ENCODE measurements at regions of chr1 and their contacts with region 1.

Region 1: DNA sequence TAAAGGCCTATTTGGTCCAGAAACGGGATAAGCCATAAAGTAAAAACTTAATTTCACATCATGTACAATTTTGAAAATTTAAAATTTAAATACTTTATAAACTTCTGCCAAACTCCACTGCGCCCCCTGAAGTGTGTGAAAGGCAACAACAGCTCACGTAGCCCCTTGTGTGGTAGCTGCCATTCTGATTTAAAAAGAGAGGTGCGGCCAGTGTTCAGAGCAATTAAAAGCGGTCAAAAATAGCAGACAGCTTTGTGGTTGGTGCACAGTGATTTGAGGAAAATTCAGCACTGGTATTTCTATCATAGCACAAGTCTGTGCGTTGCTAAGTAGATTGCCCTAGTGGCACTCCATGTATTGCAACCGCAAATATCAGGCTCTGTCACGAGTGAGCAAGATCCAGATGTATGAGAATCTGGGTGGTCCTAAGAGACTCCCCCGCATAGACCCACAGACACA is 122.5 kb downstream of the ATG4C start:
- DNase-seq: peak; percentile 29
- ATAC-seq: peak; percentile 94
- H3K4me3 Mint-ChIP-seq: no peak overlapping the region
- H3K27ac Mint-ChIP-seq: no peak overlapping the region
- H3K4me1 Mint-ChIP-seq: peaks cover 17% of the 10 kb centered on the region
- H3K27me3 Mint-ChIP-seq: no peaks in the 10 kb centered on the region
- CTCF ChIP-seq: peak; percentile 51; the same call in 1 of the 2 replicates

Region 2: DNA sequence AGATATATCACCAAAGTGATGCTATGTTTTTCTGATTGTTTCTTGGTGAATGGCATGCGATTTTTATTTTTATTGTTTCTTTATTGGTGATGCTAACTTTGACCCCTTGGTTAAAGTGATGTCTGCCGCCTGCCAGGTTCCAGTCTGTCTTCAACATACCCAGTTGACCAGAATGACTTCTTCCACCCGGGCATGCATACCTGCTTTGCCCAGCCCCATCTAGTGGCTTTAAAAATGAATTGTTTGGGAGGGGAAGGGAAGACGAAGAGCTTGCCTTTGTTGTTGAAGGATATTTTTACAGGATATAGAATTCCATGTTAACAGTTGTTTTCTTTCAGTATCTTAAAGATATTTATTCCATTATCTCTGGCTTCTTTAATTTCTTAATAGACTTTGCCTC is 57.4 kb before region 1 on chr1:
- CTCF ChIA-PET with region 1: interaction called, 13 read pairs
- POLR2A ChIA-PET with region 1: no interaction called
- DNase-seq: no peak
- ATAC-seq: peak; percentile 80
- H3K4me3 Mint-ChIP-seq: no peak overlapping the region
- H3K27ac Mint-ChIP-seq: no peak overlapping the region
- H3K4me1 Mint-ChIP-seq: no peaks in the 10 kb centered on the region
- H3K27me3 Mint-ChIP-seq: no peaks in the 10 kb centered on the region
- CTCF ChIP-seq: no peak

Region 3: DNA sequence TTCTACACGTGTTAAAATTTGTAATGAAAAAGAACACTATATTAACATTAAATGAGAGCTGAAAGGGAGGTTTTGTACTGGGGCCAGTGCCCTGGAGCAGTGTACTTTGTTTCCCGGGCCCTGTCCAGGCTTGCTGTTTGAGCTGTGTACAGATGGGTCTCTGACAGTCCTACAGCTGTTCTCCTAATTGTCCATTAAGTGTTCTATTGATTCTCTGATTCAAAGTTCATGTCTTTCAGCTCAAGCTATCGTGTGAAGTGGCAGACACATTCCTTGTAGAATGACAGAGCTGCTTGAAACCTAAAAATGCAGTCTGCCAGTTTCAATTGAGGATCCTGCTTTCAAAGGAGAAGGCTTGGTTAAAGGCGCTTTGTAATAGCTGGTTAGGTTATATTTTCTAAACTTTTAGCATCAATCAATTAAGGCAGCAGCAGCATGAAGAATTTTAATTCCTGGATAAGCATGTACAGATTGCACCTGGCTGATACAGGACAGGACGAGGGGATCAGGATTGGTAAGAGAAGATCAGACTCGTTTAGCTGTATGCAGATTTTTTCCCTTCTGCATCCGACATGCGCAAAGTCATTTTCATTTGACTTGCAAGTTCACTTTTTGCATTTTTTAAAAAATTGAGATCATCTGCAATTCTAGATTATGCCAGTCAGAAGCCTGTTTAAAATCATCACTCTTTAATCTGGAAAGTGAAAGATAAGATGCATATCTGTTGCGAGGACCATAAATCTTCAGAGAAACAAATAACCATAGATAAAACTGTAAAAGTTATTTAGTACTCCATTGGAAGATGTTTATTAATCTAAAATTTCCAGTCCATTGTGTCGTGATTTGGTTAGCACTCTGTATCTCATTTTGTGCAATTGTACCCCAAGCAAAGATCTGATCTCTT is 24.0 kb before region 1 on chr1:
- CTCF ChIA-PET with region 1: interaction called, 50 read pairs
- POLR2A ChIA-PET with region 1: no interaction called
- DNase-seq: no peak
- ATAC-seq: peak; percentile 30; the same call in 1 of the 2 replicates
- H3K4me3 Mint-ChIP-seq: no peak overlapping the region
- H3K27ac Mint-ChIP-seq: no peak overlapping the region
- H3K4me1 Mint-ChIP-seq: peaks cover 26% of the 10 kb centered on the region
- H3K27me3 Mint-ChIP-seq: no peaks in the 10 kb centered on the region
- CTCF ChIP-seq: no peak

Region 4: DNA sequence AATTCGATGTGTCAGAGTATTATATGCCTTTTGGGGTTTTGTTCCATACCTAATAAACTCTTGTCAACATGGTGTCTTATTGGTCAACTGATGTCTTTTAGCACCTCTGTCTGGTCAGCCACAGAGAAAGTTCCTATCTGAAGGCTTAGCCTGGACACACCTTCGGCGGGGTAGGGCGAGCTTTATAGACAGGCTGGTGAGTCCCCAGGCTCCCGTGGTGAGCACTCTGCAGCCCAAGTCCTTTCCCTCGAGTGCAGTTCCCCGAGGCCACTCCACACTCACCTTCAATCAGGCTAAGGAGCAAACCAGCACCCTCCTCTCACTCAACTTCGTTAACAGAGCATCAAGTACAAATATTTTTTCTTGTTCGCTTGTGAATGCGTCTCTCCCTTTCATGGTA is 11.3 kb after region 1 on chr1:
- CTCF ChIA-PET with region 1: interaction called, 38 read pairs
- POLR2A ChIA-PET with region 1: no interaction called
- DNase-seq: no peak
- ATAC-seq: peak; percentile 76
- H3K4me3 Mint-ChIP-seq: peak overlapping the region; percentile 43
- H3K27ac Mint-ChIP-seq: no peak overlapping the region
- H3K4me1 Mint-ChIP-seq: peaks cover 24% of the 10 kb centered on the region
- H3K27me3 Mint-ChIP-seq: peaks cover 9% of the 10 kb centered on the region; the same call in 1 of the 2 replicates
- CTCF ChIP-seq: no peak

Region 5: GRCh38 chr1:62953633-62954032 is 47.2 kb after region 1 on chr1:
- CTCF ChIA-PET with region 1: interaction called, 12 read pairs
- POLR2A ChIA-PET with region 1: no interaction called
- DNase-seq: no peak
- ATAC-seq: peak; percentile 62
- H3K4me3 Mint-ChIP-seq: peak overlapping the region; percentile 15
- H3K27ac Mint-ChIP-seq: no peak overlapping the region
- H3K4me1 Mint-ChIP-seq: peaks cover 21% of the 10 kb centered on the region
- H3K27me3 Mint-ChIP-seq: no peaks in the 10 kb centered on the region
- CTCF ChIP-seq: no peak

Measured in WTC11 (cell line).